ENCODE measurements at regions of chrX and their contacts with region 1.

Region 1: GRCh38 chrX:48801280-48802088 is at the start of gene HDAC6:
- DNase-seq: peak; percentile 96
- ATAC-seq: peak; percentile 89
- H3K4me3 Mint-ChIP-seq: peak within 1 kb of the TSS; percentile 90
- H3K27ac Mint-ChIP-seq: peak within 1 kb of the TSS; percentile 98
- H3K4me1 Mint-ChIP-seq: peaks cover 15% of the 10 kb centered on the region
- H3K27me3 Mint-ChIP-seq: no peaks in the 10 kb centered on the region
- total RNA-seq, gene HDAC6: 59.2 to 69.7 TPM

Region 2: GRCh38 chrX:47836164-47837072 is 965.1 kb before region 1 on chrX and contains the start of gene ZNF81:
- CTCF ChIA-PET with region 1: no interaction called
- POLR2A ChIA-PET with region 1: no interaction called
- intact Hi-C with region 1: loop called in 1 of 2 experiments (anchors 5 kb)
- DNase-seq: peak; percentile 93
- ATAC-seq: peak; percentile 92
- H3K4me3 Mint-ChIP-seq: peak within 1 kb of the TSS; percentile 95
- H3K27ac Mint-ChIP-seq: peak within 1 kb of the TSS; percentile 97
- H3K4me1 Mint-ChIP-seq: peaks cover 23% of the 10 kb centered on the region
- H3K27me3 Mint-ChIP-seq: no peaks in the 10 kb centered on the region
- total RNA-seq, gene ZNF81: 5.3 to 6.4 TPM

Region 3: GRCh38 chrX:48574270-48575266 is 226.9 kb before region 1 on chrX and contains the start of gene RBM3:
- CTCF ChIA-PET with region 1: no interaction called
- POLR2A ChIA-PET with region 1: no interaction called
- intact Hi-C with region 1: loop called in 1 of 2 experiments (anchors 1 kb)
- DNase-seq: peak; percentile 95
- ATAC-seq: peak; percentile 91
- H3K4me3 Mint-ChIP-seq: peak within 1 kb of the TSS; percentile 99
- H3K27ac Mint-ChIP-seq: peak within 1 kb of the TSS; percentile 100
- H3K4me1 Mint-ChIP-seq: peaks cover 25% of the 10 kb centered on the region
- H3K27me3 Mint-ChIP-seq: no peaks in the 10 kb centered on the region
- total RNA-seq, gene RBM3: 164 to 202 TPM

Region 4: GRCh38 chrX:48696301-48697181 is 104.9 kb before region 1 on chrX and contains the start of gene SUV39H1:
- CTCF ChIA-PET with region 1: no interaction called
- POLR2A ChIA-PET with region 1: no interaction called
- intact Hi-C with region 1: loop called (anchors 1 kb)
- DNase-seq: peak; percentile 92
- ATAC-seq: peak; percentile 94
- H3K4me3 Mint-ChIP-seq: peak within 1 kb of the TSS; percentile 91
- H3K27ac Mint-ChIP-seq: peak within 1 kb of the TSS; percentile 92
- H3K4me1 Mint-ChIP-seq: peaks cover 19% of the 10 kb centered on the region
- H3K27me3 Mint-ChIP-seq: no peaks in the 10 kb centered on the region
- total RNA-seq, gene SUV39H1: 30.8 to 31.7 TPM

Region 5: DNA sequence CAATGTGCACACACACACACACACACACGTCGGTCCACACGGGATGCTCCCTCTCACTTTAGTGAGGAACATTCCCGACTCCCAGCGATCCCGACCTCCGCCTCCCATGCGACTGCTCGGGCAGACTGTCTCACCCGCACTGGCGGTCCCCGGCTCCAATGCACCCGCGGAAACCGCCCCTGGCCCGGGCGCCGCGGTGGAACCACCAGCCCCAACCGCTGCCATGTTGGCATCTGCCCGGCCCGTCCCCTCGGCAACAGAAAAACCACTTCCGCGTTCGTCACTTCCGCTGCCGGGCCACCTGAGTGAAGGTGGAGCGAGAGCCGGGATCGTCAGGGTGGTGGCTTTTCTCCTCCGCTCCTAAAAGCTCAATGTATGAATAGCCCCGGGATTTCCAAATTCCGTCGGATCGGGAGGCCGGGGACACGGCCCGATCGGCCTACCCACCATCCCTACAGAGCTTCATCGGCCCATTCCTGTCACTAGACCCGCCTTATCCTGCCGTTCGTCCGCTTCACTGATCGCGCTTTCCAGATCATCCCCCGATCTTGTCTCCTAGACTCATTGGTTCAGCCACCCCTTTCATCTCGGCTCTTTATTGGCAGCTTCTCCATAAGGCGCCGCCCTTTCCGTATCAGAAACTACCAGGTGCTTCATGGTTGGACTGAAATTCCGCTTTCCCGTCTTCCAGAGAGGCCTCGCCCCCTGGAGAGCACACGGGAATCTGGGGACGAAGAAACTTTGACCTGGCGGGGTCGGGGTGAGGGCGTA is 110.1 kb after region 1 on chrX and contains the start of gene SLC35A2:
- CTCF ChIA-PET with region 1: no interaction called
- POLR2A ChIA-PET with region 1: interaction called, 4 read pairs
- intact Hi-C with region 1: loop called (anchors 1 to 5 kb)
- DNase-seq: peak; percentile 93
- ATAC-seq: peak; percentile 69
- H3K4me3 Mint-ChIP-seq: peak within 1 kb of the TSS; percentile 97
- H3K27ac Mint-ChIP-seq: peak within 1 kb of the TSS; percentile 92
- H3K4me1 Mint-ChIP-seq: peaks cover 39% of the 10 kb centered on the region
- H3K27me3 Mint-ChIP-seq: no peaks in the 10 kb centered on the region
- total RNA-seq, gene SLC35A2: 19.7 to 20.3 TPM

Region 6: GRCh38 chrX:49043220-49043986 is 241.9 kb after region 1 on chrX and contains the start of gene TFE3:
- CTCF ChIA-PET with region 1: no interaction called
- POLR2A ChIA-PET with region 1: no interaction called
- intact Hi-C with region 1: loop called in 1 of 2 experiments (anchors 1 kb)
- DNase-seq: peak; percentile 97
- ATAC-seq: peak; percentile 91
- H3K4me3 Mint-ChIP-seq: peak within 1 kb of the TSS; percentile 93
- H3K27ac Mint-ChIP-seq: peak within 1 kb of the TSS; percentile 94
- H3K4me1 Mint-ChIP-seq: peaks cover 41% of the 10 kb centered on the region
- H3K27me3 Mint-ChIP-seq: no peaks in the 10 kb centered on the region
- total RNA-seq, gene TFE3: 27.1 to 27.5 TPM

Region 7: GRCh38 chrX:49111791-49112190 is 310.3 kb after region 1 on chrX:
- CTCF ChIA-PET with region 1: no interaction called
- POLR2A ChIA-PET with region 1: no interaction called
- intact Hi-C with region 1: no loop called
- DNase-seq: no peak
- ATAC-seq: no peak
- H3K4me3 Mint-ChIP-seq: no peak overlapping the region
- H3K27ac Mint-ChIP-seq: no peak overlapping the region
- H3K4me1 Mint-ChIP-seq: no peaks in the 10 kb centered on the region
- H3K27me3 Mint-ChIP-seq: no peaks in the 10 kb centered on the region

Region 8: DNA sequence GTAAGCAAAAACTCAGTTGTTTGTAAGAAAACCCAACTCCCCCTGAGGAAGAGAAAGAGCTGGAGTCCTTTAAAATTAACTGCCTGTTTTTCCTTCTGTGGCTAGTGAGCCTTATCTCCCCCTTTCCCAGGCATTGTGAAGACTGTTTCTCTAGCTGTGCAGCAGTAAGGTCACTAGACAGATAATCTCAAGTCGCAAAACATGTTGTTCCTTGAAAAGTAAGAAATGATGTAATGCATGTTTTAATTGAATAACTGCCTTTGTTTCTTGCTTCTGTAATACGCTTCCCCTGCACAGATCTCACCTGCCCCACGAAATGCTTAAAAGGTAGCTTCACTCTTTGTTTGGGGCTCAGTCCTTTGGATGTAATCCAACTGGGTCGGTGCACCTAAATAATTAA is 514.6 kb after region 1 on chrX:
- CTCF ChIA-PET with region 1: no interaction called
- POLR2A ChIA-PET with region 1: no interaction called
- intact Hi-C with region 1: no loop called
- DNase-seq: no peak
- ATAC-seq: no peak
- H3K4me3 Mint-ChIP-seq: no peak overlapping the region
- H3K27ac Mint-ChIP-seq: no peak overlapping the region
- H3K4me1 Mint-ChIP-seq: no peaks in the 10 kb centered on the region
- H3K27me3 Mint-ChIP-seq: no peaks in the 10 kb centered on the region

Measured in activated CD4-positive, alpha-beta T cell treated with anti-CD3 and anti-CD28 coated beads for 36 hours (primary cell).